CD4-positive, alpha-beta T cell (primary cell): ENCODE measurements at regions of chr4 and their contacts with region 1.

Region 1: GRCh38 chr4:152106113-152106763 is 345.4 kb upstream of the GATB start:
- DNase-seq: peak in 4 of 14 experiments; percentile 46 to 72 (median 51)
- ATAC-seq: no peak
- H3K4me3 ChIP-seq: no peak overlapping the region
- H3K4me3 Mint-ChIP-seq: peak overlapping the region; percentile 65
- H3K27ac ChIP-seq: no peak overlapping the region
- H3K27ac Mint-ChIP-seq: peak overlapping the region; percentile 95
- H3K4me1 ChIP-seq: peaks cover 84% of the 10 kb centered on the region
- H3K4me1 Mint-ChIP-seq: peaks cover 92% of the 10 kb centered on the region
- H3K27me3 ChIP-seq: no peaks in the 10 kb centered on the region
- H3K27me3 Mint-ChIP-seq: no peaks in the 10 kb centered on the region
- CTCF ChIP-seq: no peak

Region 2: DNA sequence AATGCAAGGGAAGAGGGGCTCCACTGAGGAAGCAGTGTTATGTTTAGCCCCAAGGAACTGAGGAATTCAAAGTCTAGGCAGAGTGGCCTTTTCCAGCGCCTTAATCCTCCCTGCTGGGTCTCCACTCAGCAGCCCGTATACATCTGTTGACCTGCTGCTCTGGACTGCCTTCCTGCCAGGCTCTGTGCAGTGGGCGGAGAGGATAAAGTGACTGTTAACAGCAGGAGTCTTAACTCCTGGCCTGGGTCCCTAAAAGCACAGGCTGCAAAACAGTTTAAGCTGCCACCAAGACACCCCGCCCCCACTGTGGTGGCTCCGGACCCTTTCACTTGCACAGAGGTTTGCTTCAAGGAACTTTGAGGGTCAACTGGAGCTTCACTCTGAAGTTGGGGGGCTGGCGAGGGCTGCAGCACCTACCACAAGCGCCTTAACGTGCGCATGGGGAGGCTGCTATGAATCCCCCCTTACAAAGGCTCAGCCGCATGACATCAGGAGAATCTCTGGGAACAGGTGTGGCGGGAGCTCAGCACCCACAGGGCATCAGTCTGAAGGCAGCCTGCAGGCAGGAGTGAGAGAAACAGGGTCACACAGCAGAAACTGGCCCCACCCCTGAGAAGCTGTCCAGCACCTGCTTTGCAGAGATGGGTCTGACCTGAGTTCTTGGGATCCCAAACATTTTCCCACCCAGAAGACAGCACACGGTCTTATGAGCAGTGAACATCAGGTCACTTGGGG is 12.7 kb after region 1 on chr4:
- CTCF ChIA-PET with region 1: no interaction called
- POLR2A ChIA-PET with region 1: interaction called, 47 read pairs
- intact Hi-C with region 1: loop called in 1 of 2 experiments (anchors 2 kb)
- DNase-seq: no peak
- ATAC-seq: no peak
- H3K4me3 ChIP-seq: no peak overlapping the region
- H3K4me3 Mint-ChIP-seq: no peak overlapping the region
- H3K27ac ChIP-seq: no peak overlapping the region
- H3K27ac Mint-ChIP-seq: peak overlapping the region; percentile 93
- H3K4me1 ChIP-seq: peaks cover 36% of the 10 kb centered on the region
- H3K4me1 Mint-ChIP-seq: peaks cover 47% of the 10 kb centered on the region
- H3K27me3 ChIP-seq: no peaks in the 10 kb centered on the region
- H3K27me3 Mint-ChIP-seq: no peaks in the 10 kb centered on the region
- CTCF ChIP-seq: no peak

Region 3: DNA sequence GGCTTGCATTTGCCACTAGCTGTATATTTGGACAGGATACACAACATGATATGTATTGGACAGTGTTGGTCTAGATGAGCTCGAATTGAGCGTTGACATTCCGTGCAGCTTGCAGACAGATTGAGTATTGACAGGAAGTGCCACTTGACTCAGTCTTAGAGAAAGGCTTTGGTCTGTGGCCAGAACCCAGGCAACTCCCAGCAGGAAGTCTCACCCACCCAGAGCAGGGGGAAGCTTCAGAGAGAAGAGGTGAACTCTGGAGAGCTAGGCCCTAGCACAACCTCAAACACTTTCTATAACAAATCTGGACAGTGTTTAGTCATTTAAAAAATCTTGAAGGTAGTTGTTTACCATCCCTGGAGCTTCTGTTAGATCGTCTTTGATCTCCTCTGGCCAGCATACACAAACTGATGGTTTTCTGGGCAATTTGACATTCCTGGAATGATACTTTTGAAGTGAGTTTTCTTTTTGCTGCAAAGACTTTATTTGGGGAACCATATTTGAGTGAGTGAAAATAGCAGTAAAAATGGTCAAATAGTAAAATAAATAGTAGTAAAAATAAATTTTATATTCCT is 149.3 kb after region 1 on chr4:
- CTCF ChIA-PET with region 1: no interaction called
- POLR2A ChIA-PET with region 1: interaction called, 33 read pairs
- intact Hi-C with region 1: loop called in 1 of 2 experiments (anchors 10 kb)
- DNase-seq: peak; percentile 19 to 88 (median 62)
- ATAC-seq: peak; percentile 95
- H3K4me3 ChIP-seq: no peak overlapping the region
- H3K4me3 Mint-ChIP-seq: no peak overlapping the region
- H3K27ac ChIP-seq: peak overlapping the region in 1 of 2 donors; percentile 28
- H3K27ac Mint-ChIP-seq: no peak overlapping the region
- H3K4me1 ChIP-seq: peaks cover 41% of the 10 kb centered on the region
- H3K4me1 Mint-ChIP-seq: peaks cover 4% of the 10 kb centered on the region
- H3K27me3 ChIP-seq: no peaks in the 10 kb centered on the region
- H3K27me3 Mint-ChIP-seq: no peaks in the 10 kb centered on the region
- CTCF ChIP-seq: no peak

Region 4: GRCh38 chr4:153115322-153116290 is 1009.4 kb after region 1 on chr4:
- CTCF ChIA-PET with region 1: no interaction called
- POLR2A ChIA-PET with region 1: no interaction called
- intact Hi-C with region 1: loop called in 1 of 2 experiments (anchors 10 kb)
- DNase-seq: peak; percentile 43 to 92 (median 62)
- ATAC-seq: peak; percentile 54
- H3K4me3 ChIP-seq: peak overlapping the region; percentile 20
- H3K4me3 Mint-ChIP-seq: no peak overlapping the region
- H3K27ac ChIP-seq: peak overlapping the region; percentile 66
- H3K27ac Mint-ChIP-seq: no peak overlapping the region
- H3K4me1 ChIP-seq: peaks cover 66% of the 10 kb centered on the region
- H3K4me1 Mint-ChIP-seq: peaks cover 15% of the 10 kb centered on the region
- H3K27me3 ChIP-seq: no peaks in the 10 kb centered on the region
- H3K27me3 Mint-ChIP-seq: no peaks in the 10 kb centered on the region
- CTCF ChIP-seq: no peak